Activated CD8-positive, alpha-beta T cell treated with anti-CD3 and anti-CD28 coated beads for 36 hours (primary cell): ENCODE measurements at regions of chr18 and their contacts with region 1.

Region 1: GRCh38 chr18:10900435-10900834 is 248.9 kb downstream of the PIEZO2 start:
- DNase-seq: no peak
- ATAC-seq: no peak
- H3K4me3 Mint-ChIP-seq: no peak overlapping the region
- H3K27ac Mint-ChIP-seq: no peak overlapping the region
- H3K4me1 Mint-ChIP-seq: no peaks in the 10 kb centered on the region
- H3K27me3 Mint-ChIP-seq: no peaks in the 10 kb centered on the region
- CTCF ChIP-seq: no peak

Region 2: DNA sequence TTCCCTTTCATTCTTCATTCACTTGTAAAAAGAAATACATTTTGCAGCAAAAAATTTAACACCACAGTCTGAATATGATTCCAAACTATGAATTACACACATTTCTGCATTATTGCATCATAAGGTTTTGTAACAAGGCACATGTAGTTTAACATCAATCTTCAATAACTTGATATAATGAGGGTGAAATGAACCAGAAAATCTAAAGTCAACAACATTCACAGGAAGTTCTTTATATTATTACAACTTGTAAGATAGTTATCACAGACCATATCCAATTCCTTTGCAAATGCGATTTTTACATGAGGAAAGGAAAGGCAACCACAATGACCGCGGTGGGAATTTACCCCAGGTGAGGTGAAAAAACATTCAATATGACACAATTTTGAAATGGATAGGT is 161.3 kb before region 1 on chr18:
- CTCF ChIA-PET with region 1: no interaction called
- POLR2A ChIA-PET with region 1: no interaction called
- intact Hi-C with region 1: no loop called
- DNase-seq: no peak
- ATAC-seq: no peak
- H3K4me3 Mint-ChIP-seq: no peak overlapping the region
- H3K27ac Mint-ChIP-seq: no peak overlapping the region
- H3K4me1 Mint-ChIP-seq: peaks cover 2% of the 10 kb centered on the region
- H3K27me3 Mint-ChIP-seq: no peaks in the 10 kb centered on the region
- CTCF ChIP-seq: no peak

Region 3: GRCh38 chr18:10841203-10841602 is 59.2 kb before region 1 on chr18:
- CTCF ChIA-PET with region 1: no interaction called
- POLR2A ChIA-PET with region 1: no interaction called
- intact Hi-C with region 1: loop called (anchors 10 kb)
- DNase-seq: no peak
- ATAC-seq: no peak
- H3K4me3 Mint-ChIP-seq: no peak overlapping the region
- H3K27ac Mint-ChIP-seq: no peak overlapping the region
- H3K4me1 Mint-ChIP-seq: no peaks in the 10 kb centered on the region
- H3K27me3 Mint-ChIP-seq: no peaks in the 10 kb centered on the region
- CTCF ChIP-seq: no peak

Region 4: DNA sequence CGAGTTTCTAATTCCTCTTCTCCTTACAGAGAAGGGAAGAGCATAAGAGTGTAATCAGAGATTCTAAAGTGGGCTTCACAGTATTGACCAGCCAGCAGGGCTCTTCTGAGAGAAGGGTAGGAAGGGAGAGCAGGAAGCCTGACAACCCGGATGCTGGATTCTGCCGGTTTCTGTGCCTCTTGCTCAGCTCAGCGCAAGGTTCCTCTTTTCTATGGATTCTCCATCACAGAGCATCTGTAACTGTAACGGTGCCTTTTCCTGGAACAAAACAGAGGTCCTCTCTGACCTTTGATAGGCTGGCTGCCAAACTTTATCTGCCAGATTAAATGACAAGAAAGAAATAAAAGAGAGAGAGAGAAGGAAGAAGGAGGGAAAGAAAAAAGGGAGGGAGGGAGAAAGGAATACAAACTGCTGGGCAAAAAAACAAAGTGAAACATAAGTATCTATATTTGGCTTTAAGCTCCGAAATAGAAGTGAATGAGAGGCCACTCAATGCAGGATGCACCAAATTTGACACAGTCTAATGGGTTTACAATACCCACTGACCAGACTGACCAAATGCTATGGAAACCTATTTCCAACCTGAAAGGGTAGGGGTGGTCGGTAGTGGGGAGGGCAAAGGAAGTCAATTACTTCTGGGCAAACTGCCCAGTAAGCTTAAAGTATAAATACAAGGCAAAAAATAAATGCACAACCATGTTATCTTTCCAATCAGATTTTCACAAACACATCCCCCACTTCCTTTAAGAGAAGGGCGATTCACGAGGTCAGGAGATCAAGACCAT is 189.7 kb after region 1 on chr18:
- CTCF ChIA-PET with region 1: no interaction called
- POLR2A ChIA-PET with region 1: no interaction called
- intact Hi-C with region 1: no loop called
- DNase-seq: no peak
- ATAC-seq: no peak
- H3K4me3 Mint-ChIP-seq: no peak overlapping the region
- H3K27ac Mint-ChIP-seq: no peak overlapping the region
- H3K4me1 Mint-ChIP-seq: no peaks in the 10 kb centered on the region
- H3K27me3 Mint-ChIP-seq: peaks cover 4% of the 10 kb centered on the region
- CTCF ChIP-seq: no peak